ENCODE measurements at regions of chr1 and their contacts with region 1.

Region 1: DNA sequence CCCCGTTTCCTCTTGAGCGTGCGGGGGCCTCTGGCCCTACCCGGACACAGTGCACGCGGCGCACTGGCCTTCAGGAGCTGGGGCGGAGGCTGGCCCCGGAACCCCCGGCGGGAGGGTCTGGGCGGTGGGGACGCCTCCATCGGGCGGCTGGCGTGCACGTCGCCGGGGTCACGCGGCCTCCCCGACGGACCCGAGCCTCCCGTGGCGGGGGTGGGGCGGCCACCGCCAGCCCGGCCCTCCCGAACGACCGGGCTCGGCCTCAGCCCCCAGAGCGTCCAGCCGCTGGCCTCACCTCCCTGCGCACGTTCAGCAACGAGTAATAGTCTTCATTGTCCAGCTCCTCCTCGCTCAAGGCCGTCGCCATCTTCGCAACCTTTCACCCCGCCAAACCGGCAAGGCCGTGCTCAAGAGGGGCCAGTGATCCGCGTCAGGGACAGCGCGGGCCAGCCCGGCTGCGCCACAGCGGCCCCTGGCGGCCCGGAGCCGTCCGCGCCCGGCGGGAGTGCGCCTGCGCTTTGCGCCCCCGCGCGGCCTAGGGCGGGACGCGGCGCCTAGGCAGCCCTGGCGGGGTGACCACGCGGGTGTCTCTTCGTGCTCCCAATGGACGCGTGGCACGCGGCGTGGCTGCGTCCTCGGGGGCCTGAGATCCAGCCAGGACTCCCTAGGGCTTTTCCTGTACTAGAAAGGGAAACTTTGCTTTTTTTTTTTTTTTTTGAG is at the start of gene DNAJC11:
- DNase-seq: peak; percentile 78
- H3K4me3 ChIP-seq: peak within 1 kb of the TSS; percentile 68 to 98 (median 92)
- H3K27ac ChIP-seq: peak within 1 kb of the TSS; percentile 84
- H3K4me1 ChIP-seq: peaks cover 16% of the 10 kb centered on the region
- H3K27me3 ChIP-seq: no peaks in the 10 kb centered on the region
- CTCF ChIP-seq: peak; percentile 64 to 90
- total RNA-seq, gene DNAJC11: 27.3 to 69.3 TPM

Region 2: GRCh38 chr1:5286244-5286643 is 1415.4 kb before region 1 on chr1:
- CTCF ChIA-PET with region 1: no interaction called
- dilution Hi-C with region 1: no loop called
- in situ Hi-C with region 1: no loop called
- intact Hi-C with region 1: no loop called
- DNase-seq: no peak
- H3K4me3 ChIP-seq: no peak overlapping the region
- H3K27ac ChIP-seq: no peak overlapping the region
- H3K4me1 ChIP-seq: no peaks in the 10 kb centered on the region
- H3K27me3 ChIP-seq: no peaks in the 10 kb centered on the region
- CTCF ChIP-seq: no peak

Region 3: GRCh38 chr1:7207875-7208646 is 506.5 kb after region 1 on chr1:
- CTCF ChIA-PET with region 1: no interaction called
- dilution Hi-C with region 1: no loop called
- in situ Hi-C with region 1: loop called in 1 of 2 experiments (anchors 25 kb)
- intact Hi-C with region 1: no loop called
- DNase-seq: peak; percentile 64
- H3K4me3 ChIP-seq: no peak overlapping the region
- H3K27ac ChIP-seq: no peak overlapping the region
- H3K4me1 ChIP-seq: no peaks in the 10 kb centered on the region
- H3K27me3 ChIP-seq: no peaks in the 10 kb centered on the region
- CTCF ChIP-seq: peak; percentile 99